A549 (cell line): ENCODE measurements at regions of chr17 and their contacts with region 1.

Region 1: GRCh38 chr17:78708510-78708973 is 73.5 kb downstream of the CYTH1 start:
- DNase-seq: peak; percentile 92 to 99
- ATAC-seq: peak; percentile 97 to 98
- H3K4me3 ChIP-seq: no peak overlapping the region
- H3K27ac ChIP-seq: peak overlapping the region; percentile 78 to 88
- H3K4me1 ChIP-seq: peaks cover 48% of the 10 kb centered on the region
- CTCF ChIP-seq: peak; percentile 99
- EP300 ChIP-seq: no peak; a peak in 1 of 5 replicates
- POLR2A ChIP-seq: no peak
- RAD21 ChIP-seq: peak; percentile 100

Region 2: GRCh38 chr17:78168242-78168902 is 540.2 kb before region 1 on chr17 and contains the start of gene SYNGR2:
- CTCF ChIA-PET with region 1: no interaction called
- POLR2A ChIA-PET with region 1: no interaction called
- DNase-seq: peak; percentile 83 to 97
- ATAC-seq: peak; percentile 64 to 66
- H3K4me3 ChIP-seq: peak within 1 kb of the TSS; percentile 89
- H3K27ac ChIP-seq: peak within 1 kb of the TSS; percentile 86 to 96
- H3K4me1 ChIP-seq: peaks cover 26% of the 10 kb centered on the region
- CTCF ChIP-seq: no peak
- EP300 ChIP-seq: no peak
- POLR2A ChIP-seq: peak; percentile 76
- RAD21 ChIP-seq: no peak
- polyA plus RNA-seq, gene SYNGR2: 113 and 133 TPM in 2 replicates

Region 3: DNA sequence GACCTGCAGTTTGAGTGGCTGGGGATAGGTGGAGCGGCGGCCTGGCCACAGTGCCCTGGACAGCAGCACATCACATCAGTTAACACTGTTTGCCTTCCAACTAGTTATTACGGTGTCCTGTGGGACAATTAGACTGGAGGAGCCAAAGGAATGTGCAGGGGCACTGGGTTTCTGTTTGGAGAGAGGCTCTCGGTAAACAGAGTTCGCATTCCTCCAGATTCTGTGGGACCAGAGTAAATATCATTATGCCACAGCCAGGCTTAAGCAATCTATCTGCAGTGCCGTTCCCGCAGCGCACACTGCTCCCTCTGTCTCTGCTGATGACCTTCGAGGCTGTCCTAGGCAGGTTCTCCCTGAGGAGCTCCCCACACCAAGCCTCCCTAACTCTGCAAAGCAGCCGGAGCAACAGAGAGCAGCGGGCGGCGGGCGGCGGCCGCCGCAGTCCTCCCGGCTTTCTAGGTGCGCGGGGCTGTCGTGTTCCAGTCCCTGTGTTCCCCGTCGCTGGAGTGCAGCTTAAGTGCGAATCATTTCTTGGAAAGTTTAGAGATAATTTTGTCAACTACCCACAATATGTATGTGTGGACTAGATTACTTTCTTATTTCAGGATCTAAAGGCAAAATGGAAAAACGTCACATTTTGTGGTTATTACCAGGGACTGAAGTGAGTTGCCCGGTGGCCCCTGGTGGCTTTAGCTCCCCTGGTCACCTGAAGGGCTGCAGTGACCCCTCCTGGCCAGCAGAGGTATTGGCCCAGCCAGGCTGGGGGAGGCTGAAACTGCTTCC is 286.9 kb before region 1 on chr17:
- CTCF ChIA-PET with region 1: interaction called, 23 read pairs
- POLR2A ChIA-PET with region 1: no interaction called
- DNase-seq: peak; percentile 91 to 95
- ATAC-seq: peak; percentile 79 to 87
- H3K4me3 ChIP-seq: no peak overlapping the region
- H3K27ac ChIP-seq: peak overlapping the region; percentile 61 to 78
- H3K4me1 ChIP-seq: peaks cover 38% of the 10 kb centered on the region
- CTCF ChIP-seq: peak; percentile 98
- EP300 ChIP-seq: peak in 1 of 2 experiments; percentile 63; a peak in 2 of 5 replicates
- POLR2A ChIP-seq: no peak
- RAD21 ChIP-seq: peak; percentile 95 to 99

Region 4: DNA sequence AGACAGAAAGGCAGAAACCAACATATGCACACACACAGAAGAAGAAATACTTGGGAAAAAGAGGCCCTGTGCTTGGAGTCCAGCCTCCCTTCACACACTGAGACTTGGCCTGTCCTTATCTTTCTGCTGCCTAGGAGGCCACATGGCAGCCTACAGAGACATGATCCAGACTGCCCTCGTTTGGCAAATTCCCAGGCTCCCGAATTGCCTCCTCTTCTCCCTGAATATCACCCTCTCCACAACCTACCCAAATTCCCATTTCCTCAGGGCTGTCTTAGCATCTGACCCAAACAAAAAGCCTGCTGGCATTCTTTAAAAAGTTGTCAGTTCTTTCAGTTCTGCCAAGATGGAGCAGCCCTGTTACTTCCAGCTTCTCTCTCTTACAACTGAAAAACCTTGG is 191.1 kb before region 1 on chr17:
- CTCF ChIA-PET with region 1: interaction called, 48 read pairs
- POLR2A ChIA-PET with region 1: no interaction called
- DNase-seq: no peak
- ATAC-seq: no peak
- H3K4me3 ChIP-seq: no peak overlapping the region
- H3K27ac ChIP-seq: peak overlapping the region in 1 of 2 experiments; percentile 21; a peak in 1 of 6 replicates
- H3K4me1 ChIP-seq: no peaks in the 10 kb centered on the region
- CTCF ChIP-seq: no peak
- EP300 ChIP-seq: no peak
- POLR2A ChIP-seq: no peak
- RAD21 ChIP-seq: no peak

Region 5: GRCh38 chr17:78598013-78598471 is 110.5 kb before region 1 on chr17:
- CTCF ChIA-PET with region 1: interaction called, 35 read pairs
- POLR2A ChIA-PET with region 1: interaction called, 37 read pairs
- DNase-seq: no peak
- ATAC-seq: no peak
- H3K4me3 ChIP-seq: no peak overlapping the region
- H3K27ac ChIP-seq: peak overlapping the region; percentile 94 to 99
- H3K4me1 ChIP-seq: peaks cover 74% of the 10 kb centered on the region
- CTCF ChIP-seq: no peak
- EP300 ChIP-seq: no peak
- POLR2A ChIP-seq: no peak
- RAD21 ChIP-seq: no peak

Region 6: GRCh38 chr17:78653382-78653781 is 55.2 kb before region 1 on chr17:
- CTCF ChIA-PET with region 1: interaction called, 15 read pairs
- POLR2A ChIA-PET with region 1: no interaction called
- DNase-seq: peak in 1 of 2 experiments; percentile 59
- ATAC-seq: peak; percentile 73 to 80; a peak in 5 of 6 replicates
- H3K4me3 ChIP-seq: no peak overlapping the region
- H3K27ac ChIP-seq: peak overlapping the region; percentile 3 to 60; a peak in 4 of 6 replicates
- H3K4me1 ChIP-seq: peaks cover 29% of the 10 kb centered on the region
- CTCF ChIP-seq: no peak
- EP300 ChIP-seq: no peak
- POLR2A ChIP-seq: no peak
- RAD21 ChIP-seq: no peak

Region 7: DNA sequence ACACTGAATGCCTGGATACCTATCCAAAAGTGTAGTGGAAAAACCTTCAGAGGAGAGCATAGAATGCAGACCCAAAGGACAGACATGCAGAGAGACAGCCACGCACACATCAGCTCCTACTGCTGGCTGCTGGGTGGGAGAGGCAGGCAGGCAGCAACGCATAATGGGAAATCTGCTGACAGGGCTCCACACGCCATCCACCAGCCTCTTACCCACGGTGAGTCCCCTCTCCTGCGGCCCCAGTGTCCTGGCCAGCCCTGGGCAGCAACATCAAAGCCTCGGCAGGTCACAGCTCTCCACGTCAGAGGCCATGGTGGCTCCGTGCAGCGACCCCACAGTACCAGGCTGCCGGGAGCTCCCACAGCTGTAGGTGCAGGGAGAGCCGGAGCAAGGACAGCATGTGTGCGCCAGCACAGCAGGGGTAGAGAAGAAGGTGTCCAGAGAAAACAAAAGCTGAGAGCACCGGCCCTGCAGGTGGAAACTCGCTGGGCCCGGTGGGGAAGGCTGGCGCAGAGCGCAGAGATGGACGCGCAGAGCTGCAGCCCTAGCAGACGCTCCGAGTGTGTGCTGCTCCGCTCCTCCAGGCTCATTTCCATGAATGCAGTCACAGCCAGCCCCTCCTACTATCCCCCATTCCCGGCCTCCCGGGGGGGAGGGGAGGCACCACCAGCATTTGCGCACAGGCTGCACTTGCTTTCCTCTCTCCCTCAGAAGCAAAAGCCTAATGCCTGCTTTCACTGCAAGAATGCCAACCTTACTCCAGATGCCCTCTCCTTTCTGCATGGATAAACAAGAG is 14.7 kb after region 1 on chr17:
- CTCF ChIA-PET with region 1: interaction called, 65 read pairs
- POLR2A ChIA-PET with region 1: interaction called, 3 read pairs
- DNase-seq: no peak
- ATAC-seq: peak; percentile 10 to 12; a peak in 3 of 6 replicates
- H3K4me3 ChIP-seq: no peak overlapping the region
- H3K27ac ChIP-seq: peak overlapping the region in 1 of 2 experiments; percentile 61; a peak in 2 of 6 replicates
- H3K4me1 ChIP-seq: peaks cover 39% of the 10 kb centered on the region
- CTCF ChIP-seq: no peak
- EP300 ChIP-seq: no peak
- POLR2A ChIP-seq: no peak
- RAD21 ChIP-seq: no peak